ENCODE measurements at regions of chr3 and their contacts with region 1.

Region 1: GRCh38 chr3:73681218-73682009 is 56.7 kb upstream of the PDZRN3 start:
- DNase-seq: no peak

Region 2: DNA sequence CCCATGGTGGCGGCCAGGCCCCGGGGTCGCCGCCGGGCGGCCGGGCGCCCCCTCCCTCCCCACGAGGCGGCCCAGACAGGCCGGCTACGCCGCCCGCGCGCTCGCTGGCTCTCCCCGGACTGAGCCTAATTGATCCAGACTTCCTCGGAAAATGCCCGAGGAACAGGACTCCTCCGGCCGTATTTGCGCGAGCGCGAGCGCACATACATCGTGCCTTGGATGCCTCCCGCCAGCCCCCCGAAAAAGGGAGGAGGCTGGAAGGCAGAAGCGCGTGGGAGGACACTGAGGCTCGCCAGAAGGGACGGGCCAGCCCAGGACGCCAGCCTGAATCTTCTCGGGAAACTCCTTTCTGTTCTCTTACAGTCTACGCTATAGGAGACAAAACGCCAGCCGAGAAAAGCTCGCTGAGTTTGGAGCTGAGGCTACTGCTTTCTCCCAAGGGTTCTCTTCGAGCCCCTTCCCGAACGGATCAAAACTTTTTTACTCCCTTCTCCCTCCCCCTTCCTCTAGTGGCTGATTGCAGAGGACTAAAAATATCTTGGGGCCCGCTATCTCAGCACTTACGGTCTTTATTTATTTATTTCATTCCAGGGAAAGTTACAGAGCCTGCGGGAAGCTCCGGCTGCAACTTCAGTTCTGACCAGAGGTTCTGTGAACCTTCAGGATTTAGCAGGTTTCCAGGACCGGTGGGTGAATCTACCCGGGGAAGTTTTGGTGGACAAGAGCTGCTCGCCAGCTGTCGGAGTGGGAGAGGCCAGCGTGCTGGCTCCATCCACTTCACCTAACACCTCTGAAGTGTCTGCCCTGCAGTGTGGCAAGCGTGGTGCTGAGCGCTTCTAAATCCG is 56.4 kb before region 1 on chr3 and contains the start of gene PDZRN3:
- intact Hi-C with region 1: no loop called
- DNase-seq: peak; percentile 92
- total RNA-seq, gene PDZRN3: 59.5 to 71.9 TPM

Region 3: DNA sequence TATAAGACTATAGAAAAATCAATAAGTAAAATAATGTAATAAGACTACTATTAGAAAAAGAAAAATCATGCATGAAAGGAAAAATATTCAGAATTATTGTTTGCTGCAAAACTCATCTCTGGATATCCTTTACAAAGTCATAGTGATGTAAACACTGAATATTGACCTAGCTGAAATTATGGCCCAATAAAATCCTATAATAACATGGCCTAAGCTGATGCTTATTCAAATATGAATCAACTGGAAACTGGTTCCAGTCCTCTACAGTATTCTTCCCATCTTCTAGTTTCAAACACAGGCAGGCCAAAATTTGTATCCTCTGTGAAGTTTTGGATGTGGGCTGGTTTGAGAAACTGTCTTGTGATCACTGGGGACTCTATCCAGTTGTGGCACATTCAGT is 798.5 kb after region 1 on chr3:
- intact Hi-C with region 1: loop called in 1 of 2 experiments (anchors 5 kb)
- DNase-seq: no peak